T-cell (primary cell): ENCODE measurements at regions of chr9 and their contacts with region 1.

Region 1: GRCh38 chr9:132486706-132487350 is 76.8 kb downstream of the CFAP77 start:
- DNase-seq: peak in 33 of 35 experiments; percentile 4 to 80 (median 44)
- ATAC-seq: peak; percentile 66 to 78 (median 72)
- H3K4me3 ChIP-seq: peak overlapping the region; percentile 11 to 36
- H3K4me3 Mint-ChIP-seq: peak overlapping the region; percentile 50 to 71 (median 63)
- H3K27ac ChIP-seq: peak overlapping the region; percentile 28
- H3K27ac Mint-ChIP-seq: peak overlapping the region in 1 of 2 donors; percentile 65
- H3K4me1 ChIP-seq: peaks cover 16 to 34% of the 10 kb centered on the region in 2 experiments
- H3K4me1 Mint-ChIP-seq: peaks cover 26 to 39% (median 33%) of the 10 kb centered on the region in 3 donors
- H3K27me3 ChIP-seq: peaks cover 2 to 50% of the 10 kb centered on the region in 2 experiments
- H3K27me3 Mint-ChIP-seq: peaks cover 27 to 32% of the 10 kb centered on the region in 2 donors

Region 2: GRCh38 chr9:132937463-132937901 is 450.7 kb after region 1 on chr9:
- CTCF ChIA-PET with region 1: interaction called in 1 of 2 experiments, 11 read pairs
- POLR2A ChIA-PET with region 1: no interaction called
- DNase-seq: no peak
- ATAC-seq: no peak
- H3K4me3 ChIP-seq: no peak overlapping the region
- H3K4me3 Mint-ChIP-seq: no peak overlapping the region
- H3K27ac ChIP-seq: no peak overlapping the region
- H3K27ac Mint-ChIP-seq: no peak overlapping the region
- H3K4me1 ChIP-seq: no peaks in the 10 kb centered on the region
- H3K4me1 Mint-ChIP-seq: peaks cover 18 to 27% (median 18%) of the 10 kb centered on the region in 3 donors
- H3K27me3 ChIP-seq: no peaks in the 10 kb centered on the region
- H3K27me3 Mint-ChIP-seq: no peaks in the 10 kb centered on the region